RWPE1 (cell line): ENCODE measurements at regions of chr14 and their contacts with region 1.

Region 1: DNA sequence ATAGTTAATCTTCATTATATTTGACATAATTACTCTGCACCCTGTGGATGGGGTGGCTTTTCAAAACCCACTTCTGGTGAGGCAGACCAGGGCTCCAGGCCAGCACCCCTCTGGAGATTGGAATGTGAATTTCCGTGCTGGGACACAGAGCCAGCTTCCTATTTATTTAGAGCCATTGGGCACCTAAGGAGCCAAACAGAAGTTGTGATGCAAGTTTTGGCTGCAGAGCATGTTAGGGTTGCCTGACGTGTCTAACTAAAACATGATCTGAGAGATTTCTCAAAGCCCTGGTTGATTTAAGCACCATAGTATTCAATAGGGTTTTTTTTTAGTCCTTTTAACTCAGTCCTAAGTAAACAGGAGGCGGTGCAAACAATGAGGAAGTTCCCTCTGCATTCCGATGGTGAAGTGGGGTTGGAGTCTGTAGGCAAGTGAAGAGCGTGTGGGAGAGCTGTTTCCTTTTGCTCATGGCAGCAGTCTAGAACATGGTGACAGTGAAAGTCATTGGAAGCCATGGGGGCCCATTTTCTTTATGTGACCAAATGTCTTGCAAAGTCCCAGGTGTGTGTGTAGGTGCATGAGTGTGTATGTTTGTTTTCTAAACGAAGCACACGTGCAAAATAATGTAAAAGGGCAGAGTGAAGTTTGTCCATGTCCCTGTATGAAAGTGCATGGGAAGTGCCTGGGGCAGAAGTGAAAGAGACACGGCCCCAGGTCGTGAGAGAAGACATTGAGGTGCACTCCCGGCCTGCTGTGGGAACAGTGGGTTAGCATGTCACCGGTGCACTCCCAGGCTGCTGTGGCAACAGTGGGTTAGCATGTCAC is 117.7 kb downstream of the PRKCH start:
- DNase-seq: peak; percentile 44
- H3K27ac ChIP-seq: peak overlapping the region; percentile 37
- CTCF ChIP-seq: no peak

Region 2: GRCh38 chr14:61388173-61388975 is 50.7 kb before region 1 on chr14:
- CTCF ChIA-PET with region 1: no interaction called
- POLR2A ChIA-PET with region 1: interaction called, 13 read pairs
- DNase-seq: peak; percentile 84
- H3K27ac ChIP-seq: peak overlapping the region; percentile 94
- CTCF ChIP-seq: no peak

Region 3: GRCh38 chr14:61456720-61457119 is 17.6 kb after region 1 on chr14:
- CTCF ChIA-PET with region 1: no interaction called
- POLR2A ChIA-PET with region 1: no interaction called
- DNase-seq: peak; percentile 69
- H3K27ac ChIP-seq: no peak overlapping the region
- CTCF ChIP-seq: peak; percentile 89